ENCODE measurements at regions of chr17 and their contacts with region 1.

Region 1: DNA sequence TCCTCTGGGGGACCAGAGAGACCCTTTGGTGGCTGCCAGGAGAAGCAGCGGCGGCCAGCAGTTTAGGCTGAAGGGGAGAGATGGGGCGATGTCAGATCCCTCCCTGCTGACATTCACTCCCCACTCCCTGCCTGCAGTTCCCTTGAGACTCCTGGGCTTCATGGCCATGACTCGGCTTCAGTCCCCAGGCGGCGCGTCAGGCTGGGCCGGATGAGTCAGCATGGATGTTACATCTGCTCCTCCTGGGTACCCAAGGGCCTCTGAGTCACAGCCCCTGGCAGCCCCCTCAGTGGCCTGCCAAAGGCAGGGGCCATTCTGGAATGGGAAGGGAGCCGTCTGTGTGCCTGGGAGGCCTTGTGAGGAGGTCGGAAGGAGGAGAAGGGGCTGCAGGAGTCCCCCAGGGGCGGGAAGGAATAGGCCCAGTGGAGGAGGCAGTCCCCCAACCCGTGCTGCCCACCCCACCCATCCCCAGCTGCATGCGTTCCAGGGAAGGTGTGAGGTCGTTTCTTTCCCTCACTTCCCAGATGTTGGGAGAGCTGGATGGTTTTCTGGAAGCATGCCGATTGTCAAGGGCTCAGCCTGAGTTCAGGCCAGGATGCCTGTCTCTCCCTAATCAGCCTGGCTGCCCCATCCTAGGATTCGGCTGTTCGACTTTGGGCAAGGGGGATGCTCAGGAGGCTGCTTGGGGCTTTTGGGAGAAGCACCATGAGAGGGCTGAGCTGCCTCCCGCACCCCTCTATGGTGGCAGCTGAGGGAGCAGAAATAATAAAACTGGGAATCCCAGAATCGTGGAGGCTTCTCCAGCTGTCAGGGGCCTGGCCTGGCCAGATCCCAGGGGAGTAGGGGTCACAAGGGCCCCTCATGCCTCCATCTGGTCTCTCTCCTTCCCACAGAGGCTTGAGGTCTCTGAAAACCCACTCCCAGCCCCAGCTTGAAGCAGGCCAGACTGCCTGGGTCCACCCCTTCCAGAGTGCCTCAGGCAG is 9.7 kb downstream of the RHBDL3 start:
- DNase-seq: peak; percentile 64 to 75
- ATAC-seq: peak in 3 of 4 donors; percentile 26 to 71 (median 34)
- H3K4me3 ChIP-seq: no peak overlapping the region
- H3K27ac ChIP-seq: no peak overlapping the region
- H3K4me1 ChIP-seq: no peaks in the 10 kb centered on the region
- H3K27me3 ChIP-seq: peaks cover 0 to 27% (median 5%) of the 10 kb centered on the region in 3 donors
- CTCF ChIP-seq: no peak

Region 2: GRCh38 chr17:32298298-32298697 is 22.9 kb after region 1 on chr17:
- intact Hi-C with region 1: no loop called
- DNase-seq: no peak
- ATAC-seq: no peak
- H3K4me3 ChIP-seq: no peak overlapping the region
- H3K27ac ChIP-seq: no peak overlapping the region
- H3K4me1 ChIP-seq: no peaks in the 10 kb centered on the region
- H3K27me3 ChIP-seq: no peaks in the 10 kb centered on the region
- CTCF ChIP-seq: no peak

Region 3: GRCh38 chr17:32311028-32311536 is 35.7 kb after region 1 on chr17:
- intact Hi-C with region 1: loop called in 1 of 2 experiments (anchors 5 kb)
- DNase-seq: no peak
- ATAC-seq: no peak
- H3K4me3 ChIP-seq: peak overlapping the region; percentile 22
- H3K27ac ChIP-seq: no peak overlapping the region
- H3K4me1 ChIP-seq: no peaks in the 10 kb centered on the region
- H3K27me3 ChIP-seq: peaks cover 0 to 4% (median 0%) of the 10 kb centered on the region in 3 donors
- CTCF ChIP-seq: no peak

Measured in psoas muscle (tissue), 8 donors.